SK-N-SH (cell line): ENCODE measurements at regions of chr22 and their contacts with region 1.

Region 1: GRCh38 chr22:29245637-29246385 is 22.0 kb downstream of the RHBDD3 start:
- DNase-seq: peak; percentile 84
- H3K4me3 ChIP-seq: peak overlapping the region in 1 of 2 experiments; percentile 30; a peak in 1 of 4 replicates
- H3K27ac ChIP-seq: no peak overlapping the region
- H3K4me1 ChIP-seq: peaks cover 0 to 4% of the 10 kb centered on the region in 2 experiments; a peak in 1 of 4 replicates
- H3K27me3 ChIP-seq: no peaks in the 10 kb centered on the region
- CTCF ChIP-seq: peak; percentile 93
- EP300 ChIP-seq: no peak
- RAD21 ChIP-seq: peak; percentile 93

Region 2: DNA sequence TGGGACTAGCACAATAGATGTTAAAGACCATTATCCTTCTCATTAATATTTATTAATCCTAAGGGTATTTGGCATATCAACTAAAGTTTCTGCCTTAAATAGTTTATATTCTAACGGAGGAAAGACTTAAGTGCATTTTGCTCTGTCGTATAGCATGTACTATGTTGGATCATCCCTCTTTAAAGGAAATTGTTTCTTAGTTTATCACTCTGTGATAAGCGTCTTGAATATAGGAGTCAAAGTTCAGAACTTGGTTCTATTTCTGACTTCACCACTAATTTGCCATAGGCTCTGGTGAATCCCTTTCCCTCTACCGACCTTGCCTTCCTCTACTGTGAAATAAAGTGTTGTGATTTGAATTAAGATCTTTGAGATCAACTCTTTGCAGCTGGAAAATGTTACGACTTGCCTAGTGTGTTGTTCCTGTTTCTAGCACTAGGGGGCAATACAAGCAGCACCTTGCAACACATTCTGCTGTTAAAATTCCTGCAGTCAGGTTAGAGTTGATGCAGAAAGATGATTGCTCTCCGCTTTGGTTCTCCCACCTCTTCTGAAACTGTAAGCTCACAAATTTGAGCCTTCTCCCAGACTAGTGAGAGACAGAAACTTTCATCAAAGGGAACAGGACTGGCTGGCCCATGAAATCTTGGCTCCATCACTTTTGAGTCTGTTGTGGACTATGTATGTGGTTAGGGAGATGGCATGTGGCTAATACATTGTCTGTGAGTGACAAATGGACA is 390.3 kb before region 1 on chr22:
- CTCF ChIA-PET with region 1: interaction called, 12 read pairs
- POLR2A ChIA-PET with region 1: no interaction called
- DNase-seq: peak; percentile 71
- H3K4me3 ChIP-seq: no peak overlapping the region; a peak in 1 of 4 replicates
- H3K27ac ChIP-seq: no peak overlapping the region
- H3K4me1 ChIP-seq: no peaks in the 10 kb centered on the region
- H3K27me3 ChIP-seq: no peaks in the 10 kb centered on the region
- CTCF ChIP-seq: peak; percentile 91
- EP300 ChIP-seq: no peak
- RAD21 ChIP-seq: peak; percentile 95

Region 3: DNA sequence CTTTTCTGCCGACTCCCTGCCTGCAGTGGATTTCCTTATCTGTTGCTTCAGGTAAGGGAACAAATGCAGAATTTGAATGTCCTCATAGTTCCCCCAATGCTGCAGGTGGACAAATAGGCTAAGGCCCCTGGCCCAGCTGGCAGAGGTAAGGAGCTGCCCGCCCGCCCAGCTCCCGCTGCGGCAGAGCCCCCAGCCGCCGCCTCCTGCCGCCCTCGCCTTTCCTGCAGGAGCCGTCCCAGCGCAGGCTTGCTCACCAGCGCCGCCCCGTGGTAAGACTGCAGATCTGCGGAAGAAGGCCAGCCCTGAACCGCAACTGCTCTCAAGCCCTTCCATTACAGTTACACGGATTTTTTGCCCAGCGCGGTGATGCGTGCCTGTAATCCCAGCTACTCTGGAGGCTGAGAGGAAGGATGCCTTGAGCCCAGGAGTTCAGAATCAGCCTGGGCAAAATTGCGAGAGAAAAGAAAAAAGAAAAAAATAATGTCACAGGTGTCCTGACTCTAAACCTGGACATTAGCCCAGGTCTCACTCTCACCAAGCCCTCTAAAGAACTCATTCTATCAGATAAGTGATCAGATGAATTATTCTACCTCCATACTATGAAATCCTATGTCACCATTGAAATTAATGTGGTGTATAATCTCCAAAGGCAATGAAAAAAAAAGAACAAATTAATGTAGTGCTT is 91.3 kb before region 1 on chr22:
- CTCF ChIA-PET with region 1: interaction called, 40 read pairs
- POLR2A ChIA-PET with region 1: no interaction called
- DNase-seq: peak; percentile 91
- H3K4me3 ChIP-seq: peak overlapping the region; percentile 6 to 31; a peak in 3 of 4 replicates
- H3K27ac ChIP-seq: no peak overlapping the region
- H3K4me1 ChIP-seq: peaks cover 0 to 4% of the 10 kb centered on the region in 2 experiments; a peak in 2 of 4 replicates
- H3K27me3 ChIP-seq: no peaks in the 10 kb centered on the region
- CTCF ChIP-seq: peak; percentile 91
- EP300 ChIP-seq: no peak
- RAD21 ChIP-seq: peak; percentile 80

Region 4: DNA sequence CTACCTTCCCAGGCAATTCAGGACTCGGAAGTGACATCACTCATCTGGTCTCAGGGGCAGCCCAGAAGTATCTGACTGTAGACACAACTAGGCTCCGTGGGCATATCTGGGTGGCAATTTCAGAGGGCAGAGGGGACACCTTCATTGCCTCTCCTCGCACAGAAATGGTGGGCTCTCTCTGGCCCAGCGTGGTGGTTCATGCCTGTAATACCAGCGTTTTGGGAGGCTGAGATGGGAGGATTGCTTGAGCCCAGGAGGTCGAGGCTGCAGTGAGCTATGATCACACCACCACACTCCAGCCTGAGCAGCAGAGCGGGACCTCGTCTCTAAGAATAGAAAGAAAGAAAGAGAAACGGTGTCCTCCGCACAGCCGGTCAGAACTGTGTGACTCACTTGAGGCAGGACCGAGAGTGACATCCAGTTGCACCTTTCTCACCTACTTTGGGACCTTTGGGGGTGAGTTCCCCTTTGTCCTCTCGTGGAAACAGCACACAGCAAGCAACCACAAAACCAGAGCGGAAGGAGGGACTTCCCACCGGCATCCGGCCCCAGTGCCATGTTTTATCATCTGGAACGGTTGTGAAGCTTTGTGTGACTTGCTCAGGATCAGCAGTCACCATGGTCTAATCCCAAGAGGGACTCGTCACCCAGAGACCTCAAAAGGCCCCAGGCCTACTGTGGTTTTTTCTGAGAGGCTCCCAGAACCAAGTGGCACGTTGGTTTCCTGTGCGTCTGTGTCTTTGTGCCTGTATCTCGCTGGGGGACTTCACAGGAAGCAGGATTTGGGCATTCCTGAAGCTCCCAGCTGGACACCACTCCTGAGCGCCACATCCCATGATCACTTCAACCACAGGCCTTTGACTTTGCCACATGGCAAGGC is 78.5 kb before region 1 on chr22:
- CTCF ChIA-PET with region 1: no interaction called
- POLR2A ChIA-PET with region 1: no interaction called
- DNase-seq: no peak
- H3K4me3 ChIP-seq: no peak overlapping the region
- H3K27ac ChIP-seq: no peak overlapping the region
- H3K4me1 ChIP-seq: no peaks in the 10 kb centered on the region
- H3K27me3 ChIP-seq: no peaks in the 10 kb centered on the region; the same call in 1 of the 2 replicates
- CTCF ChIP-seq: no peak
- EP300 ChIP-seq: no peak
- RAD21 ChIP-seq: no peak

Region 5: DNA sequence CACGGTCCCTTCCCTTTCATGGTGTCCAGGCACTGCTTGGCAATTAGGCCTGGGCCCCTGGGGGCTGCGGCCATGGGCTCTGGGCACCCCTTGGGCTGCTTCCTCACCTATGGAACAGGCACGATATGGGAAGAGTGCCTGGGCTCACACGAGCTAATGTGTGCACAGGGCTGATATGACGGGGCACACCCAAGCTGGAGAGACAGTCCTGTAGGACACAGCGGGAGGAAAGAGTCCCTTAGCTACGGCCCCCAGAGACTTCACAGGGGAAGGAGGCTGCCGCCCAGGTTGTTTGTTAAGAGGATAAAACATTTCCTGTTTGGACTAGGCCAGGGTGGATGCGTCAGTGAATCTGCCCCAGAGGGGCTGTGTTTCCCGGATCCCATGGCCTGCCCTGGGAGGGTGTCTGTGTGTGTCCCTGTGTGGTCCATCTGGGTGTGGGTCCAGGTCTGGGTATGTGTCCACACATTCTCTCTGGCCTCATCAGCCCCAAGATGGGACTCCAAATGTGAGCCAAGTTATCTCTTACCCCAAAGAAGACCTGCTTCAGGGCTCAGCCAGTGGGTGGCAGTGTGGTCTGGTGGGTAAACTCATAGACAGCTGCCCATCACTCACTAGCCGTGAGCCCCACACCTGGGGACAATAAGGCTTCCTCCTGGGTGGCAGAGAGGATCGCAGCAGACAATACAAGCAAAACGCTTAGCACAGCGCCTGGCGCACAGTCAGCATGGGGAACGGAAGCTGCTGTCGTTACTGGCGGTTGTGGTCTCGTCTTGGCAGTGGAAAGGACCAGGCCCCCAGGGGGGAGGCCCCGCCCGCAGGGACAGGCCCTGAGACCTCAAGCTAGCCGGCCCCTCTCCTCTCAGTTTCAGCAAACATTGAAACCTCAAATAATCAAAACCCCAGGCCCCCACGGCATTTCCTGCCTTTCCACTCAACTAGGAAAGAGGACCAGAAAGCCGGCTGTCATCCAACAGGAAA is 43.3 kb before region 1 on chr22:
- CTCF ChIA-PET with region 1: interaction called, 49 read pairs
- POLR2A ChIA-PET with region 1: no interaction called
- DNase-seq: peak; percentile 41
- H3K4me3 ChIP-seq: no peak overlapping the region
- H3K27ac ChIP-seq: no peak overlapping the region
- H3K4me1 ChIP-seq: peaks cover 0 to 7% of the 10 kb centered on the region in 2 experiments; a peak in 1 of 4 replicates
- H3K27me3 ChIP-seq: no peaks in the 10 kb centered on the region; the same call in 1 of the 2 replicates
- CTCF ChIP-seq: no peak; the same call in 1 of the 2 replicates
- EP300 ChIP-seq: no peak
- RAD21 ChIP-seq: peak; percentile 32; the same call in 1 of the 2 replicates

Region 6: GRCh38 chr22:29219881-29220670 is 25.7 kb before region 1 on chr22:
- CTCF ChIA-PET with region 1: interaction called, 21 read pairs
- POLR2A ChIA-PET with region 1: no interaction called
- DNase-seq: peak; percentile 21
- H3K4me3 ChIP-seq: no peak overlapping the region
- H3K27ac ChIP-seq: no peak overlapping the region
- H3K4me1 ChIP-seq: peaks cover 0 to 2% of the 10 kb centered on the region in 2 experiments; a peak in 1 of 4 replicates
- H3K27me3 ChIP-seq: no peaks in the 10 kb centered on the region
- CTCF ChIP-seq: no peak
- EP300 ChIP-seq: no peak
- RAD21 ChIP-seq: no peak

Region 7: DNA sequence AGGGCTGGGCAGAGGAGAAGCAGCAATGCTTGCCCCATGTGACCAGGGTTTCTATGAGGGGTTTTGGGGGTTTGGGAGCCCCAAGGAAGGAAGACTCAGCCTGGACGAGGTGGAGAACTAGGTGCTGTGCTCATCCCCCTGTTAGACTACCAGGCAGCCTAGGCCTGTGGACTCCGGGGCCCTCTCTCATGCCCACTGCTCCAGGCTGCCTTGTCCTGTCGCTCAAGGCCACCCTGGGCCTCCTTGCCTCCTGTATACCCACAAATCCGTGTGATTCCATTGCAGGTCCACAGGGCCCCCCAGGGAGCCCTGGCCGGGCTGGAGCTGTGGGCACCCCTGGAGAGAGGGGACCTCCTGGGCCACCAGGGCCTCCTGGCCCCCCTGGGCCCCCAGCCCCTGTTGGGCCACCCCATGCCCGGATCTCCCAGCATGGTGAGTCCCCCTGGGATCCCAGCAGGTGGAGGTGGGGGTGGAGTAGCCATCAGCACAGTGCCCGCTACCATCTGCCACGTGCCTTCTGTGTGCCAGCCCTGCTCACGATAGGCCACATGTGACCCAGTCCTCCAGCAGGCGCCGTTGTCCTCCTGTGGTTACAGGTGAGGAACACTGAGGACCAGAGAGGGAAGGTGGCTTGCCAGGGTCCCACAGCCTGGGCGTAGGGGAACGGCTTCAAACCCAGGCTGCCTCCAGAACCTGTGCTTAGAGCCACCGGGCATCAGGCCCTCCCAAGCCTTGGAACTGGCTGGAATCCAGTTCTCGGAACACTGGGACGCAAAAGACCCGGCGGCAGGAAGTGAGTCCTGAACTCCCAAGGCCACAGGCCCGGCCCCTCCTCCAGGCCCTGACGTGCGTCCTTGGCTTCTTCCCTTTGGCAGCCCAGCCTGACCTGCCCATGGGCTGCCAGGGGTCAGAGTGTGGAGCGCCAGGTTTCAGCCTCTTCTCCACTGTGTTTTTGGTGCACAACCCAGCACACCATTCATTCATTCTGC is 13.5 kb before region 1 on chr22:
- CTCF ChIA-PET with region 1: interaction called, 42 read pairs
- POLR2A ChIA-PET with region 1: no interaction called
- DNase-seq: peak; percentile 20
- H3K4me3 ChIP-seq: no peak overlapping the region
- H3K27ac ChIP-seq: no peak overlapping the region
- H3K4me1 ChIP-seq: no peaks in the 10 kb centered on the region
- H3K27me3 ChIP-seq: no peaks in the 10 kb centered on the region
- CTCF ChIP-seq: no peak
- EP300 ChIP-seq: no peak
- RAD21 ChIP-seq: no peak

Region 8: GRCh38 chr22:29267858-29268417 is 22.1 kb after region 1 on chr22 and contains the starts of genes EWSR1 and RHBDD3:
- CTCF ChIA-PET with region 1: interaction called, 40 read pairs
- POLR2A ChIA-PET with region 1: no interaction called
- DNase-seq: peak; percentile 97
- H3K4me3 ChIP-seq: peak within 1 kb of the TSS; percentile 95 to 97
- H3K27ac ChIP-seq: peak within 1 kb of the TSS; percentile 95 to 99
- H3K4me1 ChIP-seq: peaks cover 25 to 39% of the 10 kb centered on the region in 2 experiments
- H3K27me3 ChIP-seq: no peaks in the 10 kb centered on the region
- CTCF ChIP-seq: no peak
- EP300 ChIP-seq: peak in 1 of 2 experiments; percentile 76; a peak in 2 of 4 replicates
- RAD21 ChIP-seq: no peak
- polyA plus RNA-seq, gene EWSR1: 173 and 234 TPM in 2 replicates
- polyA plus RNA-seq, gene RHBDD3: 19.0 and 23.0 TPM in 2 replicates

Region 9: GRCh38 chr22:29313121-29313580 is 67.3 kb after region 1 on chr22:
- CTCF ChIA-PET with region 1: no interaction called
- POLR2A ChIA-PET with region 1: no interaction called
- DNase-seq: peak; percentile 86
- H3K4me3 ChIP-seq: no peak overlapping the region
- H3K27ac ChIP-seq: no peak overlapping the region
- H3K4me1 ChIP-seq: peaks cover 18 to 27% of the 10 kb centered on the region in 2 experiments; a peak in 3 of 4 replicates
- H3K27me3 ChIP-seq: peaks cover 21% of the 10 kb centered on the region
- CTCF ChIP-seq: peak; percentile 69
- EP300 ChIP-seq: no peak
- RAD21 ChIP-seq: no peak